Ascending aorta (tissue), 2 donors: ENCODE measurements at regions of chr1 and their contacts with region 1.

Region 1: DNA sequence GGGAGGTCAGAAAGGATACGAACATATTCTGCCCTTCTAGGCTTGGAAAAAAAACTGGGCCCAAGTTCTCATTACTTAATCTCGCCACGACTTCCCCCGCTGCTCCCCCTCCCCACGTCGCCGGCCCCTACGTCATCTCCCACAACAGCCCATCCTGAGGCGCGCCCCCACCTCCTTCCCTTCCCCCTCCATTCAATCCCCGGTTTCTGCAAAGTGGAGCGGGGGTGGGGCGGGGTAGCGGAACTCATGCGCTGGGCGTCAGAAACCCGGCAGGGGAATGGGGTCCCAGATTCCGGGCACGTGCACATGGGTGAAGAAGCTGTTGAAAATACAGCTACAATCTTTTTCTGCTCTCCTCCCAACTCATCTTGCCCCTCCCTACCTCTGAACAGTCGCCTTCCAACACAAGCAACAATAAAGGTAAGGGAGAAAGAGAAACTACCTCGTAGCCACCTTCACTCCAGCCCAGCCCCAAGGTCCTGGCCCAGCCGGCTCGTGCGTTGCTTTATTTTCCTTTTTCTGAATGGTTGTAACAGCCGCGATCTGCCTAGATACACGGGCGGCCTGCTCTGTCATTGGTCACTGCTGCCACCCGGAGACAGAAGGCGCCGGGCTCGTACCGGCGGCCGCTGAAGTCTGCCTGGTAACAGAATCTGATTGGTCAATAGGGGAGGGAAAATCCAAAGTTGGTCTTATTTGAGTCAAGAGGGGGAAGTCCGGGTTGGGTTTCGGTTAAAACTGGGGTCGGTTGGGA is at the start of gene RFX5:
- DNase-seq: peak; percentile 92 to 98
- H3K4me3 ChIP-seq: peak within 1 kb of the TSS; percentile 66 to 73
- H3K27ac ChIP-seq: peak within 1 kb of the TSS; percentile 83 to 90
- H3K4me1 ChIP-seq: peaks cover 0 to 9% of the 10 kb centered on the region in 2 donors
- H3K27me3 ChIP-seq: no peaks in the 10 kb centered on the region
- CTCF ChIP-seq: no peak
- total RNA-seq, gene RFX5: 8.4 TPM

Region 2: GRCh38 chr1:150906341-150906740 is 440.6 kb before region 1 on chr1:
- intact Hi-C with region 1: no loop called
- DNase-seq: no peak
- H3K4me3 ChIP-seq: no peak overlapping the region
- H3K27ac ChIP-seq: no peak overlapping the region
- H3K4me1 ChIP-seq: no peaks in the 10 kb centered on the region
- H3K27me3 ChIP-seq: no peaks in the 10 kb centered on the region
- CTCF ChIP-seq: no peak

Region 3: DNA sequence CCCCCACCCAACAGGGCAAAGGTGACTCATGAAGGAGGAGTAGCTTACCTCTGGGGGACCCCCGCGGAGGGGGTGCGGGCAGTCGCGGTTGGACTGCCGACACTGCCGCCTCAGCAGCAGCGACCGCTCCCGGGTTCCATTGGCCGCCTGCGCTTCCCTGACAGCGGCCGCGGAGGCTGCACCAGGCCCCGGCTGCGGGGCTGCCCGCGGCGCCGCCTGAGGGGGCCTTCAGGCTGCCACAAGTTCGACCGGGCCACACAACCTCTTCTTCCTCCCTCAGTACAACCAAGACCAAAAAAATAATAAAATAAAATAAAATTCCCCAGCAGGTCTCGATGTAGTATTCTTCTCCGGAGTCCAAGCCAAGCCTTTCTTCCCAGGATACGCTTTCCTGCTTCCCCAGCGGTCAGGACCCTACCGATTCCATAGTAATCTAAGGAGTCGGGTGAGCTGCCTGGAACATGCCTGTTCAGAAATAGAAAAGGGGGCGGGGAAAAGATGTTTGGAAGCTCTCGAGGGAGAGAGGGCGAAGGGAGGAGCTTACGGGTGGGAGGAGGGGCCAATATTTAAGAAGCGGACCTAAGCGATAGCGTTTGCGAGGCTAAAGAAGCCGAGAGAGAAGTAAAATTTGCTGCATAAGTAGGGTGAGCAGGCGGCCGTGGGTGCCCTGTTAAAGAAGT is 19.6 kb before region 1 on chr1 and contains the start of gene PI4KB:
- intact Hi-C with region 1: loop called (anchors 1 kb)
- DNase-seq: peak; percentile 72 to 97
- H3K4me3 ChIP-seq: peak within 1 kb of the TSS; percentile 62 to 74
- H3K27ac ChIP-seq: peak within 1 kb of the TSS; percentile 92 to 93
- H3K4me1 ChIP-seq: peaks cover 0 to 22% of the 10 kb centered on the region in 2 donors
- H3K27me3 ChIP-seq: no peaks in the 10 kb centered on the region
- CTCF ChIP-seq: no peak
- total RNA-seq, gene PI4KB: 94.8 TPM

Region 4: GRCh38 chr1:151372061-151372934 is 25.4 kb after region 1 on chr1 and contains the start of gene SELENBP1:
- intact Hi-C with region 1: loop called (anchors 1 kb)
- DNase-seq: peak in 1 of 2 donors; percentile 89
- H3K4me3 ChIP-seq: peak within 1 kb of the TSS; percentile 48 to 63
- H3K27ac ChIP-seq: peak within 1 kb of the TSS; percentile 71 to 79
- H3K4me1 ChIP-seq: peaks cover 15 to 34% of the 10 kb centered on the region in 2 donors
- H3K27me3 ChIP-seq: no peaks in the 10 kb centered on the region
- CTCF ChIP-seq: no peak
- total RNA-seq, gene SELENBP1: 102 TPM

Region 5: DNA sequence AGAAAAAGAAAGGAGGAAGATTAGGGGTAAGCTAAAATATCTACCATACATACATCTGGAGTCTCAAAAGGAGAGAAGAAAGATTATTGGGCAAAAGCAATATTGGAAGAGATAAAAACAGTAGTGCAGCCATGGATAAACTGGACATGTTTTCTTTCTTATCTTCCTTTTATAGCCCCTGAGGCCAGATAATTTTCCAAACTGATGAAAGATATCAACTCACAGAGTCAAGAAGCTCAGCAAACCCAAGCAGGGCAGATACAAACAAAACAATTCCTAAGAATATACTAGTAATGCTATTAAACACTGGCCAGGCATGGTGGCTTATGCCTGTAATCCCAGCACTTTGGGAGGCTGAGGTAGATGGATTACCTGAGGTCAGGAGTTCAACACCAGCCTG is 46.6 kb after region 1 on chr1:
- intact Hi-C with region 1: no loop called
- DNase-seq: no peak
- H3K4me3 ChIP-seq: no peak overlapping the region
- H3K27ac ChIP-seq: no peak overlapping the region
- H3K4me1 ChIP-seq: no peaks in the 10 kb centered on the region
- H3K27me3 ChIP-seq: no peaks in the 10 kb centered on the region
- CTCF ChIP-seq: no peak